ENCODE measurements at regions of chr1 and their contacts with region 1.

Region 1: GRCh38 chr1:168452329-168452728 is 91.5 kb downstream of the XCL2 start:
- DNase-seq: no peak
- H3K4me3 ChIP-seq: no peak overlapping the region
- H3K27me3 ChIP-seq: no peaks in the 10 kb centered on the region
- CTCF ChIP-seq: no peak

Region 2: GRCh38 chr1:168428063-168428731 is 24.1 kb before region 1 on chr1:
- CTCF ChIA-PET with region 1: no interaction called
- POLR2A ChIA-PET with region 1: no interaction called
- DNase-seq: no peak
- H3K4me3 ChIP-seq: no peak overlapping the region
- H3K27me3 ChIP-seq: no peaks in the 10 kb centered on the region
- CTCF ChIP-seq: no peak

Region 3: GRCh38 chr1:168469690-168470089 is 17.4 kb after region 1 on chr1:
- CTCF ChIA-PET with region 1: interaction called, 19 read pairs
- POLR2A ChIA-PET with region 1: interaction called, 3 read pairs
- DNase-seq: peak; percentile 95
- H3K4me3 ChIP-seq: no peak overlapping the region
- H3K27me3 ChIP-seq: no peaks in the 10 kb centered on the region
- CTCF ChIP-seq: no peak

Region 4: GRCh38 chr1:168491527-168492164 is 39.3 kb after region 1 on chr1:
- CTCF ChIA-PET with region 1: no interaction called
- POLR2A ChIA-PET with region 1: no interaction called
- DNase-seq: no peak
- H3K4me3 ChIP-seq: no peak overlapping the region
- H3K27me3 ChIP-seq: no peaks in the 10 kb centered on the region
- CTCF ChIP-seq: no peak

Measured in BJ (cell line).